Breast epithelium (tissue), 4 donors: ENCODE measurements at regions of chr3 and their contacts with region 1.

Region 1: GRCh38 chr3:77038468-77038929 is 1.4 kb upstream of the ROBO2 start:
- DNase-seq: peak; percentile 51 to 57
- H3K4me3 ChIP-seq: peak overlapping the region; percentile 51 to 70 (median 52)
- H3K27ac ChIP-seq: no peak overlapping the region
- H3K4me1 ChIP-seq: peaks cover 3 to 11% of the 10 kb centered on the region in 2 donors
- H3K27me3 ChIP-seq: peaks cover 0 to 38% of the 10 kb centered on the region in 2 donors
- CTCF ChIP-seq: peak; percentile 42 to 71 (median 67)
- POLR2A ChIP-seq: no peak

Region 2: DNA sequence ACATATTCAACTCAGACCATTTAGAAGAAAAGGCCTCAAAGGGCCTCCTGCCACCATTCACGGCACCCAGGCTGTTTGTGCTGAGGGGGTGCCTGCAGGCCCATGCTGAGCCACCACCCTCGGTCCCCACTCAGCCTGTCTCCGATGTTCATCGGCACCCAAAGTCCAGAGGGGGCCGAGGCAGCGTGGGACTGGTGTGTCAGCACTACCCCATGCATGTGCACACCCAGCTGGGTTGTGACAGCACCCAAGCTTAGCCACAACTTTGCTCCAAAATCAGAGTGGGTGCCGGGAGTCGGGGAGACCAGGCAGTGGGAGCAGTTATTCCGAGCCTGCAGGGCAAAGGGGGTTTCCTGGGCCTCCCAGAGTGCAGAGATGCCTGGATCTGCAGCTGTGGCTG is 744.6 kb before region 1 on chr3:
- intact Hi-C with region 1: no loop called
- DNase-seq: no peak
- H3K4me3 ChIP-seq: no peak overlapping the region
- H3K27ac ChIP-seq: no peak overlapping the region
- H3K4me1 ChIP-seq: no peaks in the 10 kb centered on the region
- H3K27me3 ChIP-seq: no peaks in the 10 kb centered on the region
- CTCF ChIP-seq: no peak
- POLR2A ChIP-seq: no peak

Region 3: GRCh38 chr3:76841747-76842146 is 196.8 kb before region 1 on chr3:
- intact Hi-C with region 1: loop called (anchors 5 kb)
- DNase-seq: no peak
- H3K4me3 ChIP-seq: no peak overlapping the region
- H3K27ac ChIP-seq: no peak overlapping the region
- H3K4me1 ChIP-seq: no peaks in the 10 kb centered on the region
- H3K27me3 ChIP-seq: no peaks in the 10 kb centered on the region
- CTCF ChIP-seq: no peak
- POLR2A ChIP-seq: no peak

Region 4: GRCh38 chr3:77254967-77255831 is 216.7 kb after region 1 on chr3:
- intact Hi-C with region 1: loop called (anchors 2 kb)
- DNase-seq: no peak
- H3K4me3 ChIP-seq: no peak overlapping the region
- H3K27ac ChIP-seq: no peak overlapping the region
- H3K4me1 ChIP-seq: no peaks in the 10 kb centered on the region
- H3K27me3 ChIP-seq: no peaks in the 10 kb centered on the region
- CTCF ChIP-seq: peak in 2 of 3 donors; percentile 52 to 60
- POLR2A ChIP-seq: no peak